Heart right ventricle (tissue), 16 donors: ENCODE measurements at regions of chr1 and their contacts with region 1.

Region 1: GRCh38 chr1:15810073-15810472 is 2.6 kb upstream of the UQCRHL start:
- DNase-seq: no peak
- ATAC-seq: no peak
- H3K4me3 ChIP-seq: no peak overlapping the region
- H3K27ac ChIP-seq: no peak overlapping the region
- H3K4me1 ChIP-seq: no peaks in the 10 kb centered on the region
- H3K27me3 ChIP-seq: no peaks in the 10 kb centered on the region
- CTCF ChIP-seq: no peak

Region 2: GRCh38 chr1:15923241-15923640 is 113.2 kb after region 1 on chr1:
- intact Hi-C with region 1: loop called in 2 of 10 experiments (anchors 10 kb)
- DNase-seq: no peak
- ATAC-seq: no peak
- H3K4me3 ChIP-seq: no peak overlapping the region
- H3K27ac ChIP-seq: no peak overlapping the region
- H3K4me1 ChIP-seq: peaks cover 0 to 5% (median 0%) of the 10 kb centered on the region in 9 donors
- H3K27me3 ChIP-seq: no peaks in the 10 kb centered on the region
- CTCF ChIP-seq: no peak